T-cell (primary cell): ENCODE measurements at regions of chr4 and their contacts with region 1.

Region 1: DNA sequence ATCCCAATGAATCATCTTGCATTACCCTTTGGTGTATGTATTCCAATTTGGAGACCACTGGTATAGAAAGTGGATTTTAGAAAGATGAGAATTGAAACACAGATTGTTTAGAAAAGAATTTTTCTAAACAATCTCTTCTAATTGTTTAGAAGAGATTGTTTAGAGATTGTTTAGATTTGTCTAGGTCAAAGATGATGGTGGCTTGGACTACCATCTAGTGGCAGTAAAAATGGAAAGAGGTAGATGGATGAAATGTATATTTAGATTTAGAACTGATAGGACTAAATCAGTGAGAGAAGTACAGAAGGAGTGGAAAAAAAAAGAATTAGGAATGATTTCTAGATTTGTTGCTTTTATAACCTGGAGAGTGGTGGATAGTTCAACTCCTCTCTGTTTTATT is 70.6 kb downstream of the ARSJ start:
- DNase-seq: peak in 1 of 35 experiments; percentile 43
- ATAC-seq: no peak
- H3K4me3 ChIP-seq: no peak overlapping the region
- H3K4me3 Mint-ChIP-seq: no peak overlapping the region
- H3K27ac ChIP-seq: no peak overlapping the region
- H3K27ac Mint-ChIP-seq: no peak overlapping the region
- H3K4me1 ChIP-seq: peaks cover 10 to 16% of the 10 kb centered on the region in 2 experiments
- H3K4me1 Mint-ChIP-seq: peaks cover 33 to 39% (median 36%) of the 10 kb centered on the region in 3 donors
- H3K27me3 ChIP-seq: no peaks in the 10 kb centered on the region
- H3K27me3 Mint-ChIP-seq: no peaks in the 10 kb centered on the region

Region 2: GRCh38 chr4:113885291-113885690 is 23.5 kb before region 1 on chr4:
- CTCF ChIA-PET with region 1: no interaction called
- POLR2A ChIA-PET with region 1: interaction called in 1 of 2 experiments, 13 read pairs
- DNase-seq: no peak
- ATAC-seq: no peak
- H3K4me3 ChIP-seq: no peak overlapping the region
- H3K4me3 Mint-ChIP-seq: no peak overlapping the region
- H3K27ac ChIP-seq: no peak overlapping the region
- H3K27ac Mint-ChIP-seq: no peak overlapping the region
- H3K4me1 ChIP-seq: no peaks in the 10 kb centered on the region
- H3K4me1 Mint-ChIP-seq: peaks cover 3 to 6% (median 4%) of the 10 kb centered on the region in 3 donors
- H3K27me3 ChIP-seq: no peaks in the 10 kb centered on the region
- H3K27me3 Mint-ChIP-seq: no peaks in the 10 kb centered on the region

Region 3: GRCh38 chr4:114052227-114052626 is 143.4 kb after region 1 on chr4:
- CTCF ChIA-PET with region 1: no interaction called
- POLR2A ChIA-PET with region 1: interaction called in 1 of 2 experiments, 18 read pairs
- DNase-seq: no peak
- ATAC-seq: no peak
- H3K4me3 ChIP-seq: no peak overlapping the region
- H3K4me3 Mint-ChIP-seq: no peak overlapping the region
- H3K27ac ChIP-seq: no peak overlapping the region
- H3K27ac Mint-ChIP-seq: no peak overlapping the region
- H3K4me1 ChIP-seq: no peaks in the 10 kb centered on the region
- H3K4me1 Mint-ChIP-seq: peaks cover 0 to 9% (median 7%) of the 10 kb centered on the region in 3 donors
- H3K27me3 ChIP-seq: no peaks in the 10 kb centered on the region
- H3K27me3 Mint-ChIP-seq: no peaks in the 10 kb centered on the region